Activated T-helper 2 cell treated with anti-CD3 and anti-CD28 coated beads, Interferon-gamma antibody, Interleukin-2, Interleukin-4, amounts not matched to agents 10 μg/mL and 5 μg/mL and 100 μg/mL, durations not matched to agents 14 hours and 24 hours and 36 hours (primary cell): ENCODE measurements at regions of chr18 and their contacts with region 1.

Region 1: DNA sequence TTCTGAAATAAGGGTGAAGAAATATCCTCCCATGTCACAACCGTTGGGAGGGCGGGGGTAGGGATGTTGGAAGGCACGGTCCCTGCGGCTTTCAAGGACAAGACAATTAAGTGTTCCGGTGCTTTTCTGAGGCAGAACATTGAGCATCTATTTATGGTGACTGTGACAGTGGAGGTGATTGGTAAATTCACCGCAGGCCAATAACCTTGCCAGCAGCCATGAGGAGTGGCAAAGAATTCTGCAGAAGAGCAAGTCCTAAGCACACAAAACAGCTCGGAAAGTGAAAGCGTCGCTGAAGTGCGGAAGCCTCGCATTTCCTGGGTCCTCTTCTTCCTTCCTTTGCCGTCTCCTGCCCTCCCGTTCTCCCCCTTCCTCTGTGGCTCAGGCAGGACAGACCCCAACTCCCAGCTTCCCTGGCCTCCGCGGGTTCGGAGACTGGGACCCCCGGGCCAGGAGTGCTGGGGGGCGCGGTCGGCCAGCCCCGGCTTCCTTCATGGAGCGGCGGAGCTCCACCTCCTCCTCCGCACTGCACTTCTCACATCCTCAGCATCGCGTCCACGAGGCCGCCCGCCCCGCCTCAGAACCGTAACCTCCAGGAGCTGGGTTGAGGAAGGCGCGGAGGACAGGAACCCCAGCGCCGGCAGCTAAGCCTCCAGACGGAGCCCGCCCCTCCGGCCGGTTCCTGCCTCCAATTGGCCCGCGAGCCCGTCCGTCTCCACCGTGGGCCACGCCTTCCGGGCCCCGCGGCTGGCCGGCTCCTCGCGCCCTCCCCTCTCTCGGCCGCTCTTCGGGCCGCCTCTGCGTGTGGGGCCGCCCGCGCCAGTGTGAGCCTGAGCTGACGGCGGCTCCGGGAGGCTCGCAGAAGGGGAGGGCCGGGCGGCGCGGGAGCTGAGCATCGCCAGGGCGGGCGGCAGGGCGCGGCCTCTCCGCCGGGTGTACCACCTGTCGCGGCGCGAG is at the start of gene ME2:
- DNase-seq: peak; percentile 89
- H3K4me3 Mint-ChIP-seq: peak within 1 kb of the TSS; percentile 98
- H3K27ac Mint-ChIP-seq: peak within 1 kb of the TSS; percentile 99
- H3K4me1 Mint-ChIP-seq: peaks cover 19% of the 10 kb centered on the region
- H3K27me3 Mint-ChIP-seq: peaks cover 6% of the 10 kb centered on the region
- total RNA-seq, gene ME2: 115 and 117 TPM in 2 replicates

Region 2: DNA sequence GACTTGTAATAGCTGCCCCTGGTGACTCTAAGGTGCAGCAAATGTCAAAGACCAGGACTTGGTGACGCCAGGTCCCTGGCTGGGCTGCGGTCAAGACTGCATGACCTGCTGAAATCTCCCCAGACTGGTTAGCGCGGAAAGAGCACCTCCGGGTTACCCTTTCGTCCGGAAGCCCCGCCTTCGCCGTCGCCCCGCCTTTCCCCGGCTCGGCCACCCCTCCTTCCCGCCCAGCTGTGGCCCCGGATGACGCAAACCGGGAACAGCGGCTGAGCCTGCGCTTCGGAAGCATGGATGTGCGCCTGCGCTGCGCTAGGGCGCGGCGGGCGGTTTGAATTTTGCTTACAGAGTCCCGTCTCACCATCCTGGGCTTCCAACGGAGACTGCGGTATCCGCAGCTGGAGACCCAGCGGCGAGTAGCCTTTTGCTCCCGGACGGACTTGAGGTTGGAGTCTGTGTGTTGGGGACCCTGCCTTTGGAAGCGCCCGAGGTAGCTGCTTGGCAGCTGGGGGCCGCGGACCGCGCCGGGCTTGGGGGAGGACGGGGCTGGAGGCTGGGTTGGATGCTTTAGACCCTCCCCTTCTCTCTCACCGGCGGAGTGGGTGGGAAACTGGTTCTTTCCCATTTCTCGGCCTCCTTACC is 503.8 kb before region 1 on chr18 and contains the start of gene SKA1:
- intact Hi-C with region 1: loop called (anchors 10 kb)
- DNase-seq: peak; percentile 87
- H3K4me3 Mint-ChIP-seq: peak within 1 kb of the TSS; percentile 87
- H3K27ac Mint-ChIP-seq: peak within 1 kb of the TSS; percentile 86
- H3K4me1 Mint-ChIP-seq: peaks cover 13% of the 10 kb centered on the region
- H3K27me3 Mint-ChIP-seq: peaks cover 4% of the 10 kb centered on the region
- total RNA-seq, gene SKA1: 23.5 and 23.6 TPM in 2 replicates

Region 3: DNA sequence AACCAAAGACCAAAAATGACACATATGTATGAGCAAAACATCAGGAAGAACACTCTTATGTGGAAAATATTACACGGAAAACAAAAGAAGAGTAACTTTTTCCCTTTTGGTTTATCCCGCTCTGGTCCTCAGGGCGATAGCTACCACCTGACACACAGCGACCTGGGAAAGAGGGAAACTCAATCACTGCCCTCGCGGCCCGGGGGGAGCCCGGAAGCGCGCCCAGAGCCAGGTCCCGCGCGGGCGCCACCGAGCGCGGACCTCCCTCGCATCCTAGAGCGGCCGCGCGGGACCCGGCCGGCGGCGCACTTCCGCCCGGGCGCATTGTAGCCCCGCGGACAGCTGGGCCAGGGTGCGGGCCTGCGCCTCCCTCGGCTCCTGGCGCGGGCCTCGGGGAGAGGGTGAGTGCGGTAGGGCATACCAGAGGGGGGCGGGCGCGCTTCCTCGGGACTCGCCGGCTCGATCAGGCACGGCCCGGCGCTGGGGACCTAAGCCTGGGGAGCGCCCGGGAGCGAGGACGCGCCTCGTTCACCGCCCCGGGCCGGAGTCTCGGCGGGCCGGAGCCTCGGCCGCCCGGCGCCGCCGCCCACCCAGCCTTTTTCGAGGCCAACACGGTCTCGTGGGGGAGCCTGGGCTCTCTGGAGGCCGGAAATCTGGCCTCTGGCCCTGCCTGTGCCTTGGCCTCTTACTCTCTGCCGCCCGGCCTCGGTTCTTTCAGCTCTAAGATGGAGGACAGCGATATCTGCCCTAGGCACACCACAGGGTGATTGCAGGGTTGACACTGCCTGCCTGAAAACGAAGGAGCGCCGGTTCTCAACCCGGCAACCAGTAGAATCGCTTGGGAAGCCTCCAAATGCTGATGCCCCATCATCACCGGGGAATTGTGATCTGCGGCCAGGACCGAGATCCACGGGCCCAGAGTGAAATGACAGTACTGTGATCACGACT is 89.4 kb after region 1 on chr18 and contains the start of gene ELAC1:
- intact Hi-C with region 1: loop called (anchors 2 kb)
- DNase-seq: peak; percentile 62
- H3K4me3 Mint-ChIP-seq: peak within 1 kb of the TSS; percentile 89
- H3K27ac Mint-ChIP-seq: peak within 1 kb of the TSS; percentile 90
- H3K4me1 Mint-ChIP-seq: peaks cover 18% of the 10 kb centered on the region
- H3K27me3 Mint-ChIP-seq: no peaks in the 10 kb centered on the region
- total RNA-seq, gene ELAC1: 6.7 and 6.8 TPM in 2 replicates

Region 4: DNA sequence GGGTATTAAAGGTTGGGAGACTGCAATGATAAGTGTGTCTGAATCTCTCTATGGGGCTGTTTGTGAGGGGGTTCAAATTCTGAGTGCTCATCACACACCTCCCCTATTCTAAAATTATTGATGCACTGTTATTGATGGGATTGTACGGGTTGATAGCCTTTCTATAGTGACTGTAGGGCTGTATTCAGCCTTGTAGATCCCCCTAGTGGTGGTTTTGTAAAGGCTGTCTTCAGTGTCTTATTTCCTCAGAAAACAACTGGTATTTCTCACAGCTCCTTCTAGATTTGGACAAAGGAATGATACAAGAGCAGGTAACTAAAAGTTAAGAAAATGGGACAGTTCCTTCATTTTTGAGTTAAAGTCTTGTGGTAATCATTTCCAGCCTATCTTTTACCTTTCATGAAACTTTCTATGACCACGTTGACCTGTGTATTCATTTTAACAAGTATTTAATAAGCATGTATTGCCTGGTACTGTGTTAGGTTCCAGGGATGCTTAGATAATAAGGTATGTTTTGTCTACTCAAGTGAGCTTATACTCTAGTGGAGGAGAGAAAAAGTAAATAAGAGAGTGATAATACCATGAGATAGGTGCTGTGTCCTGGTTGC is 172.6 kb after region 1 on chr18:
- intact Hi-C with region 1: loop called (anchors 2 kb)
- DNase-seq: no peak
- H3K4me3 Mint-ChIP-seq: no peak overlapping the region
- H3K27ac Mint-ChIP-seq: peak overlapping the region; percentile 10
- H3K4me1 Mint-ChIP-seq: peaks cover 26% of the 10 kb centered on the region
- H3K27me3 Mint-ChIP-seq: no peaks in the 10 kb centered on the region

Region 5: DNA sequence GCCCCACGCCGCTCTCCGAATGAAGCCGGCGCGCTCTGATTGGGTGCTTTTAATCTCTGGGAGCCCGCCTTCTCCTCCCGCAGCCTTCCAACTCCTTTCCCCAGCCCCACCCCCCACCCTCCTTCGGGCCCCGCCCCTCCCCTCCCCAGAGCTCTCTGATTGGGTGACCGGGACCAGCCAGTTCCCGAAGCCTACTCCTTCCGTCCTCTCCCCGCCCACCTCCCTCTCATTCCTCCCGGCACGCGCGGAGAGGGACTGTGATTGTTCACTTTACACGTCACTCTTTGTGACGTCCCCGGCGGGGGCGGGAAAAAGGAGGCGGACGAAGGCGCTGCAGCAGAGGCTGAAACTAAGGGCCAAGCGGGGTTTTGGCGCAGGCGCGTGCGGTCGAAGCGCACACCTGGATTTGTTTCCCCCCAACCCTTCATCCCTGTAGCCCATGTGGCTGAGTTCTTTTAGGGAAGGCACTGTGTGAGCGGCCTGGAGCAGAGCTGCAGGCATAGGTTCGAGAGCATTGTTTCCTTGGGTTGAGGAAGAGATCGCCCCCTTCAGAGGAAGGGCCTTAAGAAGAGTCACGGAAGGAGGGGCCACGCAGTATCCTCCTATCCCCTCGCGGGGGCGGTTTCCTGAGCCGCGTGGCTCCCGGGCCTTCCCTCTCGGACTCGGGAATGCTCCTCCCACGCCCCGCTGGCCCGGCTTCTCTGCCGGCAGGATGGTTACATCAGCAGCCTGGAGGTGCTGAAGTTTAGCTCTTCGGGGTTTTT is 319.2 kb after region 1 on chr18 and contains the start of gene MEX3C:
- intact Hi-C with region 1: loop called (anchors 10 kb)
- DNase-seq: peak; percentile 99
- H3K4me3 Mint-ChIP-seq: peak within 1 kb of the TSS; percentile 95
- H3K27ac Mint-ChIP-seq: peak within 1 kb of the TSS; percentile 96
- H3K4me1 Mint-ChIP-seq: peaks cover 27% of the 10 kb centered on the region
- H3K27me3 Mint-ChIP-seq: no peaks in the 10 kb centered on the region
- total RNA-seq, gene MEX3C: 48.6 and 49.3 TPM in 2 replicates